ENCODE measurements at regions of chr19 and their contacts with region 1.

Region 1: DNA sequence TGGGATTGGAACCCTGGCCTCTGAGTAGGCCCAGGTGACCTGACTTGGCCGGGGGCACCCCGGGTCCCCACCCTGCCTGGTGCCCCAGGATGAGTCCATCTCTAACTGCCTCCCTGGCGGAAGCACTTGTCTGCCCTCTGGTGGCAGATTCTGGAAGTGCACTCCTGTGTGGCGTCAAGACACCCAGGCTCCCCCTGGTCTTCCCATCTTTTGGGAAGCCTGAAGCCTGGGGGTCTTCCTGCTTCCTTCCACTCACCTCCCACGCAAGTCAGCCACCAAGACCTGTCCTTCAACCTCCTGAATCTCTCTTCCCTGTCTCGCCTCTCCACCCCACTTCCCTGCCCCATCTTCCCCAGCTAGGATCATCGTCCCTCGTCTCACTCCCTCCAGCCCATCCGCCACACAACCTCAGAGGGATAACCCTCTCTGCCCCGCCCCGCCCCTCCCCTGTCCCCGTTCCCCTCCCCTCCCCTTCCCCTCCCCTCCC is 7.4 kb downstream of the RABAC1 start:
- DNase-seq: peak; percentile 76 to 99
- H3K4me3 ChIP-seq: peak overlapping the region in 3 of 4 experiments; percentile 32 to 52 (median 38); a peak in 6 of 8 replicates
- H3K27ac ChIP-seq: no peak overlapping the region
- H3K4me1 ChIP-seq: no peaks in the 10 kb centered on the region
- H3K27me3 ChIP-seq: no peaks in the 10 kb centered on the region
- CTCF ChIP-seq: peak; percentile 93 to 98 (median 97)
- EP300 ChIP-seq: no peak
- POLR2A ChIP-seq: no peak
- RAD21 ChIP-seq: peak; percentile 89 to 90

Region 2: GRCh38 chr19:41859618-41860418 is 91.9 kb before region 1 on chr19 and contains the start of gene RPS19:
- CTCF ChIA-PET with region 1: interaction called, 12 read pairs
- POLR2A ChIA-PET with region 1: interaction called, 31 read pairs
- DNase-seq: peak; percentile 98 to 99
- H3K4me3 ChIP-seq: peak within 1 kb of the TSS; percentile 81 to 99 (median 96)
- H3K27ac ChIP-seq: peak within 1 kb of the TSS; percentile 95
- H3K4me1 ChIP-seq: peaks cover 3 to 26% (median 14%) of the 10 kb centered on the region in 4 experiments
- H3K27me3 ChIP-seq: no peaks in the 10 kb centered on the region
- CTCF ChIP-seq: peak; percentile 45 to 76 (median 54)
- EP300 ChIP-seq: no peak
- POLR2A ChIP-seq: peak; percentile 92 to 96
- RAD21 ChIP-seq: no peak
- total RNA-seq, gene RPS19: 2,817 and 2,831 TPM in 2 replicates

Region 3: GRCh38 chr19:41893899-41894298 is 57.8 kb before region 1 on chr19:
- CTCF ChIA-PET with region 1: interaction called, 10 read pairs
- POLR2A ChIA-PET with region 1: no interaction called
- DNase-seq: no peak
- H3K4me3 ChIP-seq: no peak overlapping the region
- H3K27ac ChIP-seq: no peak overlapping the region
- H3K4me1 ChIP-seq: peaks cover 0 to 5% (median 1%) of the 10 kb centered on the region in 4 experiments; a peak in 1 of 7 replicates
- H3K27me3 ChIP-seq: no peaks in the 10 kb centered on the region
- CTCF ChIP-seq: peak; percentile 10 to 53 (median 45); a peak in 3 of 4 replicates
- EP300 ChIP-seq: no peak
- POLR2A ChIP-seq: no peak
- RAD21 ChIP-seq: no peak; a peak in 1 of 4 replicates

Region 4: DNA sequence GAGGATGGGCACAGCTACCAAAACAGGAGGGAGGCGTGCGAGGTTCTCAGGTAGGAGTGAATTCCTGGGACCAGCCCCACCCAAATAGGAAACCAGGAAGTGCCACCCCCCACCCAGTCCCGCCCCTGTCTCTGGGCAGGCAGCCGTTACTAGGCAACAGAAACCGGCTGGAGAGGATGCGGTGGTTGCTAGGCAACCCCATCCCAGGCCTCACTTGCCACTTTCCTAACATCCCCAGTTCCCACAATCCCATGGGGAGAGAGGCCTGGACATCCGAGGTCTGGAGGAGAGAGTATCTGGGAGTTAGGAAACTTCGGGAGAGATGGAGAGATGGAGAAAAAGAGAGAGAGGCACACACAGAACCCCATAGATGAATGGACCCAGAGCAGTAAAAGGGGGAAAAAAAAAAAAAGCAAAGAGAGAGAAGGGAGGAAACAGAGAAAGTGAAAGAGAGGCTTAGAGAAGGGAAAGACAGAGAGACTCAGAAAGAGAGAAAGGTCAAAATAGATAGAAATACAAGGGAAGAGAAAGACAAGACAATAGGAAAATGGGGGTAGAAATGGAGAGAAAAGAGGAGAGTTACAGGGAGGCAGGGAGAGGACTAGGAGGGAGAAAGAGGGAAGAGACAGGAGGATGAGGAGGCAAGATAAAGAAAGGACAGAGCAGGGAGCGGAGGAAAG is 114.5 kb after region 1 on chr19:
- CTCF ChIA-PET with region 1: no interaction called
- POLR2A ChIA-PET with region 1: no interaction called
- DNase-seq: peak; percentile 29 to 54
- H3K4me3 ChIP-seq: no peak overlapping the region
- H3K27ac ChIP-seq: no peak overlapping the region; the same call in 1 of the 2 replicates
- H3K4me1 ChIP-seq: peaks cover 0 to 18% (median 6%) of the 10 kb centered on the region in 4 experiments; a peak in 6 of 7 replicates
- H3K27me3 ChIP-seq: no peaks in the 10 kb centered on the region
- CTCF ChIP-seq: no peak
- EP300 ChIP-seq: no peak
- POLR2A ChIP-seq: no peak
- RAD21 ChIP-seq: no peak

Measured in H1 (cell line).